WTC11 (cell line): ENCODE measurements at regions of chr9 and their contacts with region 1.

Region 1: GRCh38 chr9:68949271-68950000 is 64.5 kb downstream of the PRKACG start:
- DNase-seq: no peak
- ATAC-seq: no peak
- H3K4me3 Mint-ChIP-seq: no peak overlapping the region
- H3K27ac Mint-ChIP-seq: no peak overlapping the region; the same call in none of the 2 replicates
- H3K4me1 Mint-ChIP-seq: peaks cover 82% of the 10 kb centered on the region
- H3K27me3 Mint-ChIP-seq: peaks cover 6% of the 10 kb centered on the region
- CTCF ChIP-seq: no peak

Region 2: GRCh38 chr9:68584189-68585033 is 365.0 kb before region 1 on chr9:
- CTCF ChIA-PET with region 1: interaction called, 10 read pairs
- POLR2A ChIA-PET with region 1: no interaction called
- DNase-seq: peak; percentile 82
- ATAC-seq: peak; percentile 93
- H3K4me3 Mint-ChIP-seq: peak overlapping the region; percentile 48
- H3K27ac Mint-ChIP-seq: peak overlapping the region; percentile 66; the same call in 1 of the 2 replicates
- H3K4me1 Mint-ChIP-seq: peaks cover 8% of the 10 kb centered on the region
- H3K27me3 Mint-ChIP-seq: peaks cover 4% of the 10 kb centered on the region
- CTCF ChIP-seq: peak; percentile 95

Region 3: DNA sequence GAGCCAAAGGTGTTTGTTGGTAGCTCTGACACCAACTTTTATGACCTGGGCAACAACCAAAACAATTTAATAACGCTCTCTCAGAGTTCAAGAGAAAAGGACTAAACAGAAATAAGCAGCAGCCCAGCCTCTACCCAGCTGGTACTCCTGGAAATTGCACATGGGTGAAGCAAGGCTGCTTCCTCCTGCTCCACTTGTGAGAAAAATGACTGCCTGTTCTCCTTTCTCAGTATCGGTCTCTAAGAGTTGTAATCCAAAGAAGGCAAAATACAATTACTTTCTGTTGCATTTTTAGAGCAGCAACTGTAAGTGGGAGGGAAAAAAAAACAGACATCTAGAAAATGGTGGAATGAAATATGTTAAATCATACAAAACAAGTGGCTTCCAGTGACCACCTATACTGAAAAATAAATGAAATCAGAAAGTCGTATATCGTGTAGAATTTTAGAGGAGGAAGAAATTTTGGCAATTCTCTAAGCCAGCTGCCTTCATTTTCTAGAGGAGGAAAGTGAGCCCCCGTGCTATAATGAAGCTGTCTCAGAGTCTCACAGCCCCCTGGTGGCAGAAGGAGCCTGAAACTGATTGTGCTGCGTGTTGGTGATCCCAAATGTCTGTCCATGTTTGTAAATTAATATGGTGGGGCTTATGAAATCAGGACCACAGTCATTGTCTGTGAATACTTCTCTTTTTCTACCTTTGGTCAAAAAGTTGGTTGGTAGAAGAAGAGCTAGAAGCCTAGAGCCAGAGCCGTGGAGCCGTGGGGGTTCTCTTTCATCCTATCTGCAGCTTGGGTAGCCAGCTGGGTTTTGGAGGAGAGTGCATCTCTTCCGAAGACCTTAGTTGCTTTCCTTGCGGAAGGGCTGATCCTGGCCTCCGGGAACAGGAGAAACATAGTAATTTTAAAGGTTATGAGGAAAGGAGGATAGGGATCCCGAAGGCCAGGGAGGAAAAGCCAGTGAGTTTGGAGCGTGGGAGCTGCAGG is 104.5 kb before region 1 on chr9:
- CTCF ChIA-PET with region 1: interaction called, 10 read pairs
- POLR2A ChIA-PET with region 1: no interaction called
- DNase-seq: peak; percentile 65
- ATAC-seq: peak; percentile 83
- H3K4me3 Mint-ChIP-seq: no peak overlapping the region
- H3K27ac Mint-ChIP-seq: no peak overlapping the region
- H3K4me1 Mint-ChIP-seq: peaks cover 15% of the 10 kb centered on the region
- H3K27me3 Mint-ChIP-seq: no peaks in the 10 kb centered on the region
- CTCF ChIP-seq: peak; percentile 49